Right cardiac atrium (tissue), 5 donors: ENCODE measurements at regions of chr20 and their contacts with region 1.

Region 1: GRCh38 chr20:62182613-62183425 is at the start of gene MTG2:
- DNase-seq: peak; percentile 96 to 98 (median 97)
- ATAC-seq: peak; percentile 98
- H3K4me3 ChIP-seq: peak within 1 kb of the TSS; percentile 96
- H3K27ac ChIP-seq: peak within 1 kb of the TSS; percentile 90
- H3K4me1 ChIP-seq: peaks cover 8% of the 10 kb centered on the region
- H3K27me3 ChIP-seq: no peaks in the 10 kb centered on the region
- total RNA-seq, gene MTG2: 20.4 to 25.7 (median 25.1) TPM

Region 2: GRCh38 chr20:62258499-62259293 is 75.9 kb after region 1 on chr20:
- intact Hi-C with region 1: no loop called
- DNase-seq: peak; percentile 70 to 80 (median 76)
- ATAC-seq: peak; percentile 83 to 90
- H3K4me3 ChIP-seq: no peak overlapping the region
- H3K27ac ChIP-seq: no peak overlapping the region
- H3K4me1 ChIP-seq: peaks cover 7% of the 10 kb centered on the region
- H3K27me3 ChIP-seq: no peaks in the 10 kb centered on the region

Region 3: DNA sequence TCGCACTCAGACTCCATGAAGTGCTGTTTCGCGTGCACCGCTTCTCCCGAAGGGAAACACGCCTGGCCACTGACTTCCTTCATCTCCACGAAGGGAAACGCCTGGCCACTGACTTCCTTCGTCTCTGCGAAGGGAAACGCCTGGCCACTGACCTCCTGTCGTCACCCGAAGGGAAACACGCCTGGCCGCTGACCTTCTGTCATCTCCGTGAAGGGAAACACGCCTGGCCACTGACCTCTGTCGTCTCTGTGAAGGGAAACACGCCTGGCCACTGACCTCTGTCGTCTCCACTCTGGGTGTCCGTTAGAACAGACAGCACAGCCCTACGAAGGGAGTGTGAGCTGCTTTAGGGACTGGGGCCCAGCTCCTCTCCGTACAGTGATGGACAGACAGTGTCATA is 102.9 kb after region 1 on chr20:
- intact Hi-C with region 1: loop called in 2 of 4 experiments (anchors 10 kb)
- DNase-seq: peak in 2 of 3 donors; percentile 81 to 83
- ATAC-seq: peak in 1 of 2 donors; percentile 82
- H3K4me3 ChIP-seq: no peak overlapping the region
- H3K27ac ChIP-seq: peak overlapping the region; percentile 88
- H3K4me1 ChIP-seq: peaks cover 7% of the 10 kb centered on the region
- H3K27me3 ChIP-seq: no peaks in the 10 kb centered on the region

Region 4: DNA sequence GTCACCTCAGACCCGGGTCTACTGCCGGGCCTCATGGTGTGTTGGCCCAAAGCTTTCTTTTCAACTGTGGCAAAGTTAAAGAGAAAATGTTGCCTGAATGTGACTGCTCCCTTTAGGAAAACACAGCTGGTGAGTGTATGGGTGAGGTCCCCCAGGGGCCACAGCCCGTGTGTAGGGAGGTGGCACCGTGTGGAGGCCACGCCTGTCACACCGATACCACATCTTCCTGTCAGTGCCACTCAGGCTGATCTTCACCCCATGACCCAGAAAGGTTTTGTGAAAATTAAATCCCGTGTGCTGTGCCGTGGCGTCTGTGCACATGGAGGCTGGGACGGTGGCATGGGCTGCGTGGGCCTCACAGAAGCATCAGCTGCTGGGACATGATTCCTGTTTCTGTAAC is 109.3 kb after region 1 on chr20:
- intact Hi-C with region 1: loop called in 2 of 4 experiments (anchors 10 kb)
- DNase-seq: peak in 1 of 3 donors; percentile 3
- ATAC-seq: no peak
- H3K4me3 ChIP-seq: no peak overlapping the region
- H3K27ac ChIP-seq: no peak overlapping the region
- H3K4me1 ChIP-seq: no peaks in the 10 kb centered on the region
- H3K27me3 ChIP-seq: no peaks in the 10 kb centered on the region

Region 5: GRCh38 chr20:62740286-62741141 is 557.7 kb after region 1 on chr20:
- intact Hi-C with region 1: no loop called
- DNase-seq: peak in 2 of 3 donors; percentile 38 to 55
- ATAC-seq: peak; percentile 12 to 63
- H3K4me3 ChIP-seq: no peak overlapping the region
- H3K27ac ChIP-seq: no peak overlapping the region
- H3K4me1 ChIP-seq: no peaks in the 10 kb centered on the region
- H3K27me3 ChIP-seq: no peaks in the 10 kb centered on the region